ENCODE measurements at regions of chr17 and their contacts with region 1.

Region 1: GRCh38 chr17:44400226-44400847 is 10.9 kb upstream of the ITGA2B start:
- DNase-seq: no peak
- ATAC-seq: peak in 1 of 2 donors; percentile 47
- H3K4me3 ChIP-seq: no peak overlapping the region
- H3K27ac ChIP-seq: peak overlapping the region in 2 of 4 donors; percentile 10 to 25
- H3K4me1 ChIP-seq: no peaks in the 10 kb centered on the region
- H3K27me3 ChIP-seq: no peaks in the 10 kb centered on the region
- CTCF ChIP-seq: peak; percentile 35 to 57 (median 53)
- POLR2A ChIP-seq: no peak

Region 2: DNA sequence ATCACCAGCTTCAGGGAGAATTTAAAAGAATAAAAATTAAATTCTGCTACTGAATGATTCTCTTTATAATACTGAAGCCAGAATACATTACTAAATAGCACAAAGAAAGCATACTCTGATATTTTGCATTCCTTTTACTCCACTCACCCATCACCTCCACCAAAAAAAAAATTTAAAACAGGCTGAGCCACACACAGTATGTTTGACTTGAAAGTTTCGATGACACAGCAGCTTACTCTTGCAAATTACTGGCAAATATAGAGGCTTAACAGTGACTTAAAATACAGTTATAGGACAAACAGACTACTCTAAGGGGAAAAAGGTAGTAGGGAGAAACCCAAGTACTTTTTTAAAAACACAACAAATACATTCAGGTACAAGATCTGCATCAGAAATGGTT is 63.7 kb after region 1 on chr17:
- in situ Hi-C with region 1: no loop called
- intact Hi-C with region 1: no loop called
- DNase-seq: no peak
- ATAC-seq: no peak
- H3K4me3 ChIP-seq: no peak overlapping the region
- H3K27ac ChIP-seq: peak overlapping the region; percentile 65 to 82 (median 81)
- H3K4me1 ChIP-seq: peaks cover 45 to 48% of the 10 kb centered on the region in 2 donors
- H3K27me3 ChIP-seq: no peaks in the 10 kb centered on the region
- CTCF ChIP-seq: no peak
- POLR2A ChIP-seq: no peak

Region 3: DNA sequence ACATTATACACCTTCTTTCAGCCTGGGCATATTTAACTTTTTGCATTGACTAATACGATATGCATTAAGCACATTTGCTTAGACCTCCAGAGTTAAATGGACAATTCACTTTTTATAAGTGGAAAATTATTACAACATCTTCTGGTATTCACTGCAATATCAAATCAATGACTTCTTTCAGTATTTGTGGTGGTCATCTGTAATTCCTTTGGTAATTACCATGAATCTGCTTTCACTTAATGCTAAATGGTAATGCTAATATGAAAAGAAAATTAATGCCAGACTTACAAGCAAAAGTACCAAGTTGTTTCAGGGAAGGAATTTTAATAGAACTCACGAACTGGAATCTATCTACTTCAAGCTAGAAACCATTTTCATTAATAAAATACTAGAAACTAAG is 96.5 kb after region 1 on chr17:
- in situ Hi-C with region 1: loop called in 2 of 4 experiments (anchors 10 kb)
- intact Hi-C with region 1: loop called (anchors 5 kb)
- DNase-seq: no peak
- ATAC-seq: no peak
- H3K4me3 ChIP-seq: no peak overlapping the region
- H3K27ac ChIP-seq: no peak overlapping the region
- H3K4me1 ChIP-seq: peaks cover 45 to 64% of the 10 kb centered on the region in 2 donors
- H3K27me3 ChIP-seq: no peaks in the 10 kb centered on the region
- CTCF ChIP-seq: no peak
- POLR2A ChIP-seq: no peak

Region 4: GRCh38 chr17:44518032-44518431 is 117.7 kb after region 1 on chr17:
- in situ Hi-C with region 1: loop called in 2 of 4 experiments (anchors 5 to 10 kb)
- intact Hi-C with region 1: loop called (anchors 1 kb)
- DNase-seq: no peak
- ATAC-seq: no peak
- H3K4me3 ChIP-seq: no peak overlapping the region
- H3K27ac ChIP-seq: no peak overlapping the region
- H3K4me1 ChIP-seq: no peaks in the 10 kb centered on the region
- H3K27me3 ChIP-seq: no peaks in the 10 kb centered on the region
- CTCF ChIP-seq: no peak
- POLR2A ChIP-seq: no peak

Region 5: DNA sequence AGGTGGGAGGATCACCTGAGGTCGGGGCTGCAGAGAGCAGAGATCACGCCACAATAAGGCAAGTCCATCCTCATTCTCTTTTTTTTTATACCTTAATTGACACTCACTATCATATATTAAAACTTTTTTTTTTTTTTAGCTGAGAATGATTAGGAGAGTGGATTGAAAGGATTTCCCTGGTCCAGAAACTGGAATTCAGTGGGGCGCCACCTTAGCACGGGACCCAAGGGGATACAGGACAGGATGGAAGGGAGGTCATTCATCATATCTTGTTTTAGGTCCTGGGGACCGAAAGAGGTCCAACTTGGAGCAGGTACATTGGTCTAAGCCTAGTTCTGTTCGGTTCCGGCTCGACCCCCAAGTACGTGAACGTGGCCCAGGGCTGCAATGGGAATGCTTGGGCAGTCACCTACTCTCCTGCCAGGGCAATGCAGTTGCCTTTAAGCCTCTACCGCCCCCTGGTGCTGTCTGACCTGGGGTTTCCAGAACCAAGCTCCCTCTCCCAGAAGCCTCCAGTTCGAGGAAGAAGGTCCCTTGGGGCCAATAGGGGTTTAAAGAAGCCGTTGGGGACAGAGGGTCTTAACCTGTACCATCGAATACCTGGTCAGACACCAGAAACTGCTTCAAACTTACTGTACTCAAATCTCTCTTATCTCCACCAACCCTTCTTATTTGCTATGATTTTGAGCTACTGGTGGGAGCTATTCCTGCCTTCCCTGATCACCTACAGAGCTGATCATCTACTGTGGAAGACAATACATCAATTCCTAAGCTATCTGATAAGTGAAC is 122.7 kb after region 1 on chr17:
- in situ Hi-C with region 1: loop called in 2 of 4 experiments (anchors 5 to 10 kb)
- intact Hi-C with region 1: loop called (anchors 1 kb)
- DNase-seq: peak; percentile 53 to 76
- ATAC-seq: peak; percentile 88 to 96
- H3K4me3 ChIP-seq: no peak overlapping the region
- H3K27ac ChIP-seq: no peak overlapping the region
- H3K4me1 ChIP-seq: no peaks in the 10 kb centered on the region
- H3K27me3 ChIP-seq: no peaks in the 10 kb centered on the region
- CTCF ChIP-seq: peak; percentile 69 to 86 (median 85)
- POLR2A ChIP-seq: no peak

Region 6: GRCh38 chr17:44533533-44534246 is 133.4 kb after region 1 on chr17:
- in situ Hi-C with region 1: no loop called
- intact Hi-C with region 1: no loop called
- DNase-seq: peak; percentile 58 to 64
- ATAC-seq: peak; percentile 75 to 84
- H3K4me3 ChIP-seq: no peak overlapping the region
- H3K27ac ChIP-seq: no peak overlapping the region
- H3K4me1 ChIP-seq: no peaks in the 10 kb centered on the region
- H3K27me3 ChIP-seq: no peaks in the 10 kb centered on the region
- CTCF ChIP-seq: peak; percentile 86 to 92 (median 90)
- POLR2A ChIP-seq: no peak

Measured in gastrocnemius medialis (tissue), 4 donors.